K562 (cell line): ENCODE measurements at regions of chr16 and their contacts with region 1.

Region 1: GRCh38 chr16:75764154-75764768 is 38.0 kb upstream of the CPHXL start:
- DNase-seq: peak; percentile 45 to 72 (median 58)
- ATAC-seq: peak; percentile 97
- H3K4me3 ChIP-seq: no peak overlapping the region
- H3K27ac ChIP-seq: no peak overlapping the region
- H3K4me1 ChIP-seq: no peaks in the 10 kb centered on the region; a peak in 1 of 5 replicates
- H3K27me3 ChIP-seq: no peaks in the 10 kb centered on the region; a peak in 1 of 5 replicates
- CTCF ChIP-seq: peak; percentile 77 to 93 (median 82)
- EP300 ChIP-seq: no peak
- POLR2A ChIP-seq: no peak
- RAD21 ChIP-seq: peak; percentile 91 to 96

Region 2: DNA sequence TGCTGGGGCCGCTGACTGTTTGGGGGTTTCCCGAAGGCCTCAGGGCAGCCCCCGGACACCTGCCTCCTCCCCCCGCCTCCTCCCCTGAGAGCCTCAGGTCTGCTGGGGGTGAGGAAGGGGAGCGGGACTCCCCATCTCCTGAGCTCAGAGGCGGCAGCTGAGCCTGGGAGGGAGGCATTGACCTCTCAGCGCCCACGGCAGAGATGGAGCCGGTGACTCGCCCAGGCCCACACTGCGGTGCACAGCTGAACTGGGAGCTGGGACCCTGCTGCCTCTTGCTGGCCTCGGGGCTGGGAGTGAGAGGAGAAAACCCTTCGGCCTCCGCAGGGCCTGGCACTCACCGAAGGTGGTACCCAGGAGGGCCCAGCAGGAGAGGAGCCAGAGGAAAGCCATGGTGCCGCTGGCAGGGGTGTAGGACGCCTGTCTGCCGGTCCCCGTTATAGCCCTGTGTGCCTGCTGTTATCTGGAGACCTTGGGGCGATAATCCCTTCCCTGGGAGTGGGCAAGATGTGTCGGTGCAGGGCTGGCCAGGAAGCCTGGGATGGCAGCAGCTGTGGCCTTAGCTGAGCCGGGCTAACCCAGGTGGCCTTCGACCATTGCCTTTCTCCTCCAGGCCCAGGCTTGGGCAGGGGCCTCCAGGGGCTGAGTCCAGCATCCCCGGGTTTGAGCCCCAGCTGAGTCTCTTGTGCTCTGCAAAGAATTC is 557.4 kb before region 1 on chr16 and contains the start of gene CTRB2:
- CTCF ChIA-PET with region 1: no interaction called
- POLR2A ChIA-PET with region 1: no interaction called
- in situ Hi-C with region 1: loop called (anchors 5 kb)
- intact Hi-C with region 1: no loop called
- DNase-seq: no peak
- ATAC-seq: no peak
- H3K4me3 ChIP-seq: no peak within 1 kb of the TSS
- H3K27ac ChIP-seq: no peak within 1 kb of the TSS
- H3K4me1 ChIP-seq: peaks cover 0 to 15% of the 10 kb centered on the region in 2 experiments; a peak in 2 of 5 replicates
- H3K27me3 ChIP-seq: peaks cover 34 to 76% of the 10 kb centered on the region in 2 experiments
- CTCF ChIP-seq: no peak
- EP300 ChIP-seq: no peak
- POLR2A ChIP-seq: no peak
- RAD21 ChIP-seq: no peak
- polyA plus RNA-seq, gene CTRB2: not detected

Region 3: GRCh38 chr16:75385507-75386152 is 378.6 kb before region 1 on chr16:
- CTCF ChIA-PET with region 1: no interaction called
- POLR2A ChIA-PET with region 1: no interaction called
- in situ Hi-C with region 1: no loop called
- intact Hi-C with region 1: loop called (anchors 1 kb)
- DNase-seq: peak; percentile 39 to 85 (median 45)
- ATAC-seq: peak; percentile 67
- H3K4me3 ChIP-seq: no peak overlapping the region
- H3K27ac ChIP-seq: no peak overlapping the region
- H3K4me1 ChIP-seq: peaks cover 0 to 3% of the 10 kb centered on the region in 2 experiments; a peak in 1 of 5 replicates
- H3K27me3 ChIP-seq: no peaks in the 10 kb centered on the region
- CTCF ChIP-seq: peak in 2 of 3 experiments; percentile 48 to 76; a peak in 4 of 6 replicates
- EP300 ChIP-seq: no peak
- POLR2A ChIP-seq: no peak
- RAD21 ChIP-seq: peak; percentile 94

Region 4: DNA sequence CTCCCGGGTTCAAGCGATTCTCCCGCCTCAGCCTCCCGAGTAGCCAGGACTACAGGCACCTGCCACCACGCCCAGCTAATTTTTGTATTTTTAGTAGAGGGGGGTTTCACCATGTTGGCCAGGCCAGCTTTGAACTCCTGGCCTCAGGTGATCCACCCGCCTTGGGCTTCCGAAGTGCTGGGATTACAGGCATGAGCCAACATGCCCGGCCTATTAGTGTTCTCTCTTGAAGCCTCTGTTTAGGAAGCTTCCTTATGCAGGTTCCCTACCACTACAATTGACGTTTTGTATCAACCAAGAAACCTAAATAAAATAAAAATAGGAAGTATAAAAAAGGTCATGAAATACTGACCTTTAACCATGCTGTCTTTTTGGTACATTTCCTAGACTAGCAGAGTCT is 244.4 kb before region 1 on chr16:
- CTCF ChIA-PET with region 1: no interaction called
- POLR2A ChIA-PET with region 1: no interaction called
- in situ Hi-C with region 1: no loop called
- intact Hi-C with region 1: loop called (anchors 1 kb)
- DNase-seq: no peak
- ATAC-seq: no peak
- H3K4me3 ChIP-seq: no peak overlapping the region
- H3K27ac ChIP-seq: no peak overlapping the region
- H3K4me1 ChIP-seq: peaks cover 0 to 14% of the 10 kb centered on the region in 2 experiments; a peak in 3 of 5 replicates
- H3K27me3 ChIP-seq: peaks cover 8 to 14% of the 10 kb centered on the region in 2 experiments; a peak in 4 of 5 replicates
- CTCF ChIP-seq: no peak
- EP300 ChIP-seq: no peak
- POLR2A ChIP-seq: no peak
- RAD21 ChIP-seq: no peak

Region 5: GRCh38 chr16:75647492-75648264 is 116.6 kb before region 1 on chr16 and contains the starts of genes KARS1 and TERF2IP:
- CTCF ChIA-PET with region 1: no interaction called
- POLR2A ChIA-PET with region 1: interaction called, 7 read pairs
- in situ Hi-C with region 1: no loop called
- intact Hi-C with region 1: loop called (anchors 5 kb)
- DNase-seq: peak; percentile 91 to 96 (median 94)
- ATAC-seq: peak; percentile 93
- H3K4me3 ChIP-seq: peak within 1 kb of the TSS; percentile 96
- H3K27ac ChIP-seq: peak within 1 kb of the TSS; percentile 93
- H3K4me1 ChIP-seq: peaks cover 15 to 24% of the 10 kb centered on the region in 2 experiments; a peak in 4 of 5 replicates
- H3K27me3 ChIP-seq: no peaks in the 10 kb centered on the region
- CTCF ChIP-seq: no peak
- EP300 ChIP-seq: no peak
- POLR2A ChIP-seq: peak; percentile 96
- RAD21 ChIP-seq: no peak
- polyA plus RNA-seq, gene KARS1: 223 to 313 TPM
- polyA plus RNA-seq, gene TERF2IP: 14.5 to 14.8 TPM